ENCODE measurements at regions of chr18 and their contacts with region 1.

Region 1: GRCh38 chr18:3245853-3246634 is 1.6 kb upstream of the MYL12A start:
- DNase-seq: peak; percentile 79
- H3K4me3 Mint-ChIP-seq: peak overlapping the region; percentile 93
- H3K27ac Mint-ChIP-seq: peak overlapping the region; percentile 99
- H3K4me1 Mint-ChIP-seq: peaks cover 42% of the 10 kb centered on the region
- H3K27me3 Mint-ChIP-seq: peaks cover 2% of the 10 kb centered on the region

Region 2: GRCh38 chr18:2571200-2572143 is 674.6 kb before region 1 on chr18 and contains the starts of genes METTL4 and NDC80:
- intact Hi-C with region 1: loop called (anchors 5 kb)
- DNase-seq: peak; percentile 79
- H3K4me3 Mint-ChIP-seq: peak within 1 kb of the TSS; percentile 97
- H3K27ac Mint-ChIP-seq: peak within 1 kb of the TSS; percentile 97
- H3K4me1 Mint-ChIP-seq: peaks cover 66% of the 10 kb centered on the region
- H3K27me3 Mint-ChIP-seq: no peaks in the 10 kb centered on the region
- total RNA-seq, gene METTL4: 15.0 and 26.2 TPM in 2 replicates
- total RNA-seq, gene NDC80: 41.2 and 42.6 TPM in 2 replicates

Region 3: DNA sequence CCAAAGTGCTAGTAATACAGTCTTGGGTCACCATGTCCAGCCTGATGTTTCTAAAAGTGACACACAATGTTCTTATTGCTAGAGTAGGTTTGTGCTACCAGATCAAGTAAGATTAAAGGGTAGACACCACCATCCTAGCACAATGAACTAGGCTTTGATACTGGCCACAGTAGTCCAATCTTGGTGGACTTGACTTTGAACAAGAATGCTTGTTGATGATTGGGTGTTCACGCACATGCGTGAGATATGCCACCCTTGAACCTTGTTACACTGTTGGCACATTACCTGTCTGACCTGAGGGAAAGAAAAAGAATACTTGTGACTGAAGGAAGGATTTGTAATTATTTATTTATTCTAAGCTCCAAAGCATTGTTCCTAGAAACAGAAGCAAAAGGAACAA is 471.4 kb before region 1 on chr18:
- intact Hi-C with region 1: loop called (anchors 5 kb)
- DNase-seq: no peak
- H3K4me3 Mint-ChIP-seq: no peak overlapping the region
- H3K27ac Mint-ChIP-seq: no peak overlapping the region
- H3K4me1 Mint-ChIP-seq: peaks cover 14% of the 10 kb centered on the region
- H3K27me3 Mint-ChIP-seq: no peaks in the 10 kb centered on the region

Region 4: GRCh38 chr18:2958819-2959298 is 287.2 kb before region 1 on chr18:
- intact Hi-C with region 1: loop called (anchors 1 kb)
- DNase-seq: peak; percentile 46
- H3K4me3 Mint-ChIP-seq: peak overlapping the region; percentile 81
- H3K27ac Mint-ChIP-seq: peak overlapping the region; percentile 99
- H3K4me1 Mint-ChIP-seq: peaks cover 93% of the 10 kb centered on the region
- H3K27me3 Mint-ChIP-seq: no peaks in the 10 kb centered on the region

Region 5: DNA sequence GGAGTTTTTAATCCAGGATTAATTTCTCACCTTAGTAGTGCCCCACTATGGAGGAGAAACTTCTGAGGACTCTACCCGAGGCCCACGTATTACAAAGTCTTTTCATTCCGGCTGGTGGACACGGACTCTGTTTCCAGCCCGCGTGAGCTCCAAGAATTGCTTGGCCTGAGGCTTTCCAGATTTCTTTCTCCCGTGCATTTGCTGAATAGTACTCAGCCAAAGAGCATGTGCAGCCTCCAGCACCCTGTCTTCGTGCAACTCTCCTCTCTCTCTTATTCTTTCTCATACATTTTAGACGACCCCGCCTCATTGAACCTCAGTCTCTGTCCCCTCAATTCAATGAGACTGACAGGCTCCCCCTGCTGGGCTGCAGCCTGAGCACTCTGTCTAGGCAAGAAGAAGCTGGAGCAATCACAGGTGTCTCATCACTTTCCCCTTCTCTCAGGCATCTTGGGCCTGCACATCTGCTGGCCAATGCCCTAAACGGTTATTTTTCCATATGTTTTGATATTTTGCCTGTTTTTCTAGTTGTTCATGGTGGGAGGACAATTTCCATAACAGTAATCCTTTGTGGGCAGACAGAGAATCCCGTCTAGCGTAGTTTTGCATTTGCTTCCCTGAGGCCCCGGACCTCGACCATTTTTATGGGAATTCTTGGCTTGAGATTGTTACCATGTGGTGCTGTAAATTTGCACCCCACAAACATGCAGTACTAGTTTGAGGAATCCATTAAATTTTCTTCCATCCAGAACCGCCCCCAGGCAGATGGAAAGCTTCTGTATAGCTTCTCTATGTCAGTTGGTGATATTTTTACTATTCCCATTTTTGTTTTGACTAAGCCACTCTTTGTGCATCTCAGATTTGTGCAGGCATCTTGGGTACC is 183.0 kb before region 1 on chr18:
- intact Hi-C with region 1: loop called (anchors 1 kb)
- DNase-seq: peak; percentile 64
- H3K4me3 Mint-ChIP-seq: peak overlapping the region; percentile 66
- H3K27ac Mint-ChIP-seq: peak overlapping the region; percentile 99
- H3K4me1 Mint-ChIP-seq: peaks cover 67% of the 10 kb centered on the region
- H3K27me3 Mint-ChIP-seq: no peaks in the 10 kb centered on the region

Region 6: GRCh38 chr18:3093624-3094337 is 152.3 kb before region 1 on chr18:
- intact Hi-C with region 1: no loop called
- DNase-seq: no peak
- H3K4me3 Mint-ChIP-seq: no peak overlapping the region
- H3K27ac Mint-ChIP-seq: no peak overlapping the region
- H3K4me1 Mint-ChIP-seq: peaks cover 1% of the 10 kb centered on the region
- H3K27me3 Mint-ChIP-seq: no peaks in the 10 kb centered on the region

Region 7: GRCh38 chr18:3261371-3262246 is 15.6 kb after region 1 on chr18 and contains the start of gene MYL12B:
- intact Hi-C with region 1: loop called (anchors 1 kb)
- DNase-seq: peak; percentile 75
- H3K4me3 Mint-ChIP-seq: peak within 1 kb of the TSS; percentile 93
- H3K27ac Mint-ChIP-seq: peak within 1 kb of the TSS; percentile 98
- H3K4me1 Mint-ChIP-seq: peaks cover 82% of the 10 kb centered on the region
- H3K27me3 Mint-ChIP-seq: no peaks in the 10 kb centered on the region
- total RNA-seq, gene MYL12B: 234 and 235 TPM in 2 replicates

Region 8: DNA sequence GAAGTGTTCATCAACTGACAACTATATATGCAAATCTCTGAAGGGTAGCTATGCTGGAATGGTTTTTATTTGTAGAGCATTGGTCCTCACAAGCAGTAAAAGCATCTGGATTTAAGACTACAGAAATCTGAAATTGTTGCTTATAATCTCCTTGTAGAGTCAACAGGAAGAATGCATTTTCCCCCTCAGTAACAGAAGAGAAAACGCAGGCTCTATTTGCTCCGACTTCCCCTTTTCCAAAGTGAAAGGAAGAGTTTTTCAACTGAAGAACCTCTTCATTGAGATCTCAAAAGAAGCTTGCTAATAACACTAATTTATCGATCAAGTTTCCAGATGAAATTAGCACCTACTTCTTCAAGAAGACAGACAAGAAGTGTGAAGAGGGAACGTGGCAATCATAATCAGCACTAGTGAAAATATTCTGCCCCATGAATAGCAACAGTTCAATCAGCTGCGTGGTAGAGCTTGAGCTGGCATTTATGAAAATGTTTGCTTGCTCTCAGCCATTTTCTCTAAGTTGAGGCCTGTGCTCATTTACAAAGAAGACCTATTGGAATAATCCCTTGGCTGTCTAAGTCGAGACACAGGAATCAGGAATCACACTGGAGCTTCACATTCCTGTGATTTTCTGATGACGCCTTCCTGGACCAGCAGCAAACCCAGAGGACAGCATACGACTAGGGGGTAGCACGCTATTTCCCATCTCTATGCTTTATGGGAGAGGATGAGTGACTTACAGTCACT is 247.6 kb after region 1 on chr18:
- intact Hi-C with region 1: no loop called
- DNase-seq: no peak
- H3K4me3 Mint-ChIP-seq: no peak overlapping the region
- H3K27ac Mint-ChIP-seq: no peak overlapping the region
- H3K4me1 Mint-ChIP-seq: peaks cover 5% of the 10 kb centered on the region
- H3K27me3 Mint-ChIP-seq: peaks cover 31% of the 10 kb centered on the region